CD4-positive, alpha-beta T cell (primary cell): ENCODE measurements at regions of chr2 and their contacts with region 1.

Region 1: GRCh38 chr2:84925724-84926376 is 20.4 kb downstream of the TMSB10 start:
- DNase-seq: peak; percentile 95 to 100 (median 99)
- ATAC-seq: peak; percentile 80
- H3K4me3 ChIP-seq: peak overlapping the region; percentile 73
- H3K4me3 Mint-ChIP-seq: peak overlapping the region; percentile 91
- H3K27ac ChIP-seq: peak overlapping the region; percentile 20 to 69
- H3K27ac Mint-ChIP-seq: peak overlapping the region; percentile 85
- H3K4me1 ChIP-seq: peaks cover 56% of the 10 kb centered on the region
- H3K4me1 Mint-ChIP-seq: peaks cover 38% of the 10 kb centered on the region
- H3K27me3 ChIP-seq: no peaks in the 10 kb centered on the region
- H3K27me3 Mint-ChIP-seq: no peaks in the 10 kb centered on the region
- CTCF ChIP-seq: peak; percentile 99

Region 2: GRCh38 chr2:84297155-84297554 is 628.7 kb before region 1 on chr2:
- CTCF ChIA-PET with region 1: no interaction called
- POLR2A ChIA-PET with region 1: no interaction called
- intact Hi-C with region 1: no loop called
- DNase-seq: no peak
- ATAC-seq: no peak
- H3K4me3 ChIP-seq: no peak overlapping the region
- H3K4me3 Mint-ChIP-seq: no peak overlapping the region
- H3K27ac ChIP-seq: no peak overlapping the region
- H3K27ac Mint-ChIP-seq: no peak overlapping the region
- H3K4me1 ChIP-seq: no peaks in the 10 kb centered on the region
- H3K4me1 Mint-ChIP-seq: no peaks in the 10 kb centered on the region
- H3K27me3 ChIP-seq: peaks cover 0 to 2% of the 10 kb centered on the region in 2 experiments
- H3K27me3 Mint-ChIP-seq: peaks cover 6% of the 10 kb centered on the region
- CTCF ChIP-seq: no peak

Region 3: GRCh38 chr2:84631047-84631446 is 294.8 kb before region 1 on chr2:
- CTCF ChIA-PET with region 1: interaction called, 13 read pairs
- POLR2A ChIA-PET with region 1: interaction called, 4 read pairs
- intact Hi-C with region 1: loop called in 1 of 2 experiments (anchors 2 kb)
- DNase-seq: peak in 3 of 14 experiments; percentile 62 to 68 (median 64)
- ATAC-seq: peak; percentile 70
- H3K4me3 ChIP-seq: no peak overlapping the region
- H3K4me3 Mint-ChIP-seq: no peak overlapping the region
- H3K27ac ChIP-seq: no peak overlapping the region
- H3K27ac Mint-ChIP-seq: no peak overlapping the region
- H3K4me1 ChIP-seq: peaks cover 10% of the 10 kb centered on the region
- H3K4me1 Mint-ChIP-seq: peaks cover 48% of the 10 kb centered on the region
- H3K27me3 ChIP-seq: no peaks in the 10 kb centered on the region
- H3K27me3 Mint-ChIP-seq: no peaks in the 10 kb centered on the region
- CTCF ChIP-seq: peak; percentile 67

Region 4: GRCh38 chr2:84846041-84846663 is 79.7 kb before region 1 on chr2:
- CTCF ChIA-PET with region 1: interaction called, 19 read pairs
- POLR2A ChIA-PET with region 1: interaction called, 14 read pairs
- intact Hi-C with region 1: loop called in 1 of 2 experiments (anchors 5 kb)
- DNase-seq: peak in 9 of 14 experiments; percentile 22 to 87 (median 60)
- ATAC-seq: peak; percentile 66
- H3K4me3 ChIP-seq: no peak overlapping the region
- H3K4me3 Mint-ChIP-seq: peak overlapping the region; percentile 84
- H3K27ac ChIP-seq: peak overlapping the region; percentile 81 to 90
- H3K27ac Mint-ChIP-seq: peak overlapping the region; percentile 96
- H3K4me1 ChIP-seq: peaks cover 100% of the 10 kb centered on the region
- H3K4me1 Mint-ChIP-seq: peaks cover 95% of the 10 kb centered on the region
- H3K27me3 ChIP-seq: no peaks in the 10 kb centered on the region
- H3K27me3 Mint-ChIP-seq: no peaks in the 10 kb centered on the region
- CTCF ChIP-seq: no peak

Region 5: GRCh38 chr2:84881581-84882414 is 44.1 kb before region 1 on chr2:
- CTCF ChIA-PET with region 1: interaction called, 56 read pairs
- POLR2A ChIA-PET with region 1: interaction called, 87 read pairs
- intact Hi-C with region 1: loop called (anchors 1 to 2 kb)
- DNase-seq: peak; percentile 79 to 92 (median 86)
- ATAC-seq: peak; percentile 66
- H3K4me3 ChIP-seq: peak overlapping the region; percentile 91
- H3K4me3 Mint-ChIP-seq: peak overlapping the region; percentile 98
- H3K27ac ChIP-seq: peak overlapping the region; percentile 64 to 79
- H3K27ac Mint-ChIP-seq: peak overlapping the region; percentile 92
- H3K4me1 ChIP-seq: peaks cover 35% of the 10 kb centered on the region
- H3K4me1 Mint-ChIP-seq: peaks cover 55% of the 10 kb centered on the region
- H3K27me3 ChIP-seq: no peaks in the 10 kb centered on the region
- H3K27me3 Mint-ChIP-seq: no peaks in the 10 kb centered on the region
- CTCF ChIP-seq: peak; percentile 79

Region 6: DNA sequence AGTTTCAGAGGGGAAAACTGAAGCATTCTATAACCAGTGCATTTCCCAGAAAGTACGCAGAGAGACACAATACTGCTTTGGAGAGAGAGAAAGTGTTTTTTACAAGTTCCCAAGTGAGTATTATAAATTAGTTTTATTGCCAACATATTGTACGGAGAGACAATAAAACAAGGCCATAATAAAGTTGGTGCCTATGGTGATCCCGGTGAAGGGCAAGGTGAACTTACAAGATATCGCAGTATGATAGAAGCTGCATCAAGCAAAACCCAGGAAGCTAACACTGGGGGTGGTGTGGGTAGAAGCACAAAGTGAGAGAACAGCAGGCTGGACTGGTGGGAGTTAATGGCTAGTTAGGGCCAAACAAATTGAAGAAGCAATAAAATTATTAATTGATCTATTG is 12.9 kb before region 1 on chr2:
- CTCF ChIA-PET with region 1: interaction called, 88 read pairs
- POLR2A ChIA-PET with region 1: interaction called, 147 read pairs
- intact Hi-C with region 1: no loop called
- DNase-seq: no peak
- ATAC-seq: no peak
- H3K4me3 ChIP-seq: no peak overlapping the region
- H3K4me3 Mint-ChIP-seq: no peak overlapping the region
- H3K27ac ChIP-seq: no peak overlapping the region
- H3K27ac Mint-ChIP-seq: no peak overlapping the region
- H3K4me1 ChIP-seq: peaks cover 16% of the 10 kb centered on the region
- H3K4me1 Mint-ChIP-seq: peaks cover 31% of the 10 kb centered on the region
- H3K27me3 ChIP-seq: no peaks in the 10 kb centered on the region
- H3K27me3 Mint-ChIP-seq: no peaks in the 10 kb centered on the region
- CTCF ChIP-seq: no peak

Region 7: GRCh38 chr2:84999553-84999955 is 73.7 kb after region 1 on chr2:
- CTCF ChIA-PET with region 1: interaction called, 10 read pairs
- POLR2A ChIA-PET with region 1: interaction called, 4 read pairs
- intact Hi-C with region 1: no loop called
- DNase-seq: no peak
- ATAC-seq: no peak
- H3K4me3 ChIP-seq: no peak overlapping the region
- H3K4me3 Mint-ChIP-seq: no peak overlapping the region
- H3K27ac ChIP-seq: no peak overlapping the region
- H3K27ac Mint-ChIP-seq: peak overlapping the region; percentile 48
- H3K4me1 ChIP-seq: peaks cover 22% of the 10 kb centered on the region
- H3K4me1 Mint-ChIP-seq: peaks cover 67% of the 10 kb centered on the region
- H3K27me3 ChIP-seq: no peaks in the 10 kb centered on the region
- H3K27me3 Mint-ChIP-seq: no peaks in the 10 kb centered on the region
- CTCF ChIP-seq: no peak

Region 8: DNA sequence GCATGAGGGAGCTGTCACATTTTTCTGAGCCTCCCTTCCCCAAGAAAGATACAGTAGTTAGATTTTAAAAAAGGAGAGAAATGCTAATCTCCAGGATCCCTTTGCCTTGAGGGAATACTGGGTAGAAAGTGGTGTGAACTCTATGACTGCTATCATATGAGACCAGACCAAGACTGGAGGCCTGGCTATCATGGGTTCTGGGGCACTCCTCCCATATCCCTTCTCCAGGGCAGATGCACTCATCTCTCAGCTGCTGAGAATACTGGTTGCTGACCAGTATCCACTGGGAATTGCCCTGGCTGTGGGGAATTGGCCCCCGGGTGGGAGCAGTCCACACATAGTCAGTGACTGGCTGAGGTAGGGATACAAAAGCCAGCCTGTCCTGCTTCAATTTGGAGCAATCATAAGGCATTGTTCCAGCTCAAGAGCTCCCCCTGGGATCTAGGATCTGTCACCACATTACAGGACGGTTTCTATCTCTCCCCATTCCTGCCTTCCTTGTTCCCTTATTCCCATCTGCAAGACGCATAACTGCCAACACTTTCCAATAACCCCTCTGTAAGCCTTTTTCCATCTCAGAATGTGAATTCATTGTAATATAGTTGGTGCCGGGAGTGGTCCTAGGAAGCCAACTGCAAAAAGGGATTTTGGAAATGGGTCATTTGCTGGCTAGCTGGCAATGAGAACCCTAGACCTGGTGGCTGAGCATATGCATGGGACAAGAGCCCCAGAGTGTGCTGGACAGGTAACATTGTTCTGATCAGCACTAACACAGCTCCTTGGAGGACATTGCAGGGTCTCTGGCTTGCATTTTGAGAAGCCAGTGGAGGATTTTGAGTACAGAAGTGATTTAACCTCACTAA is 1447.0 kb after region 1 on chr2:
- CTCF ChIA-PET with region 1: no interaction called
- POLR2A ChIA-PET with region 1: no interaction called
- intact Hi-C with region 1: no loop called
- DNase-seq: peak in 3 of 14 experiments; percentile 6 to 28 (median 26)
- ATAC-seq: no peak
- H3K4me3 ChIP-seq: no peak overlapping the region
- H3K4me3 Mint-ChIP-seq: no peak overlapping the region
- H3K27ac ChIP-seq: peak overlapping the region; percentile 37 to 56
- H3K27ac Mint-ChIP-seq: peak overlapping the region; percentile 83
- H3K4me1 ChIP-seq: peaks cover 29% of the 10 kb centered on the region
- H3K4me1 Mint-ChIP-seq: peaks cover 56% of the 10 kb centered on the region
- H3K27me3 ChIP-seq: no peaks in the 10 kb centered on the region
- H3K27me3 Mint-ChIP-seq: no peaks in the 10 kb centered on the region
- CTCF ChIP-seq: peak; percentile 25